ENCODE measurements at regions of chr9 and their contacts with region 1.

Region 1: GRCh38 chr9:128383007-128383753 is 12.0 kb downstream of the URM1 start:
- DNase-seq: no peak
- H3K4me3 ChIP-seq: no peak overlapping the region
- H3K27ac ChIP-seq: no peak overlapping the region
- H3K4me1 ChIP-seq: no peaks in the 10 kb centered on the region
- H3K27me3 ChIP-seq: no peaks in the 10 kb centered on the region
- CTCF ChIP-seq: no peak

Region 2: DNA sequence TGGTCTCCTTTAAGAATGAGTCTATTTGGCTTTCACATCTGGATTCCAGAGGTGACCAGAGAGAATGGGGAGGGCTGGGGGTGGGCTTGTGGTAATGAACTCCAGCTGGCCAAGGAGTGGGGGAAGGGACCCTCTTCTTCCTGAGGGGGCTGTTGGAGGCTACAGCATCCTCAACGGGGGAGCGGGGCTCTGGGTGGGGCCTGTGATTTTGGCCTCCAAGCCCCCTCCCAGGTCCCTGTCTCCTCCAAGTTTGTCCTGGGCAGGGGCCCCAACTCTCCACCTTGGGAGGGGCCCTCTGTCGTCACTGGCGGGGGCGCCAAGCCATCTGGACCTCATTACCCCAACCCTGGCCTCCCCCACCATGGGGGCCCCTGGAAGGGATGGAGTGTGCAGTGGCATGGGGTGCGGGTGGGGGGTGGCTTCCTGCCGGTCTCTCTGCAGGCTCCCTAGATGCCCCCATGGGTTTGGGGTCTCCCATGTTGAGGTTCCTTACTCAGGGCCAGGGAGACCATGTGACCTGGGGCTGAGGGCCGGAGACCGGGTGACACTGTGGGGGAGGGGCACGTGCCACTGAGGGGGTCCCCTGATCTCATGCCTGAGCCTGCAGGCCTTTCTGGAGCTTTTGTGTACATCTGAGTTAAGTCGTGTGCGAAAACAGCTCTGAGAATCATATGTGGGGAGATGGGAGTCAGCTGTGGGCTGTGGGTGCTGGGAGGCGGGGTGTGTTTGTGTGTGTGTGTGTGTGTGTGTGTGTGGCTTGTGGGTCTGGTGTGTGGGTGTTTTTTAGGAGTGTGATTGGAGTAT is 139.8 kb before region 1 on chr9:
- intact Hi-C with region 1: loop called (anchors 5 kb)
- DNase-seq: no peak
- H3K4me3 ChIP-seq: no peak overlapping the region
- H3K27ac ChIP-seq: peak overlapping the region; percentile 28
- H3K4me1 ChIP-seq: no peaks in the 10 kb centered on the region
- H3K27me3 ChIP-seq: no peaks in the 10 kb centered on the region
- CTCF ChIP-seq: no peak

Region 3: GRCh38 chr9:128504485-128505413 is 121.6 kb after region 1 on chr9 and contains the start of gene GLE1:
- intact Hi-C with region 1: no loop called
- DNase-seq: peak; percentile 98
- H3K4me3 ChIP-seq: peak within 1 kb of the TSS; percentile 91
- H3K27ac ChIP-seq: peak within 1 kb of the TSS; percentile 80
- H3K4me1 ChIP-seq: peaks cover 12% of the 10 kb centered on the region
- H3K27me3 ChIP-seq: no peaks in the 10 kb centered on the region
- CTCF ChIP-seq: no peak
- total RNA-seq, gene GLE1: 30.7 to 44.5 TPM